ENCODE measurements at regions of chr11 and their contacts with region 1.

Region 1: DNA sequence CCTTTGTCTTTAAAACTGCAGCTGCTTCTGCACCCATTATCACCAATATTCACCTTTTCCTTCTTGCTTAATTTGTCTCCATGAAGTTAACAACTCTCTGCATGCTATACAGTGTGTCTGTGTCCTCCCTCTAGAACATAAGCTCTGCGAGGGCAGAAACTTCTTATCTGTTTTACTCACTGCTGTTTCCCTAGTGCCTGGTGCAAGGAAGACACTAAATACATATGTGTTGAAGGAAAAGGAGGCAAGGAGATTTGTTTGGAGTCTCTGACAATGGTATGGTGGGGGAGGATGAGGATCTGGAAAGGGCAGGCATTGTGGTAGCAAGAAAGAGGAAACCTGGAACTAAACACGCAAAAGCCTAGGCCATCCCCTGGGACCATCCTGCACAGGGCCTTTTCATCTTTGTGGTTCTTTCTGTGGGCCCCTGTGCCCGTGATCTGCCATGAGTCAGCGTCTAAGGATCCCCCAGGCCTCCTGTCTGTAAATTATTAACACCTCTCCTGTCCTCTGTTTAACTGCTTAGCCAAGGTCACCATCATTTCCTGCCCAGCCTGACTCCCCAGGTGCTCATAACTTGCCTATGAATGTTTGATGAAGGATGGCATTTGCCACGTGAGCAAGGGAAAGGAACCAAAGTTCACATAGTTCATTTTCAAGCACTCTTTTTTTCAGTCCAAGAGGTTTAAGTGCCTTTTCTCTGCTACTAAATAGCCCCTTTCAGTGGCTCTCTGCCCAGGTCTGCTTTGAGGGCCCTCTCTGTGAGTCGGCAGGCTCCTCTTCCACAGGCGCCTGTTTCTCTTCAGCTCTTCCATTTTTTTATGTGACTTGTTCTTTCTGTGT is 131.1 kb downstream of the RASSF10 start:
- ATAC-seq: peak in 5 of 8 experiments; percentile 16 to 95 (median 78)
- H3K4me3 ChIP-seq: no peak overlapping the region
- H3K27ac ChIP-seq: no peak overlapping the region
- H3K4me1 ChIP-seq: peaks cover 16 to 18% of the 10 kb centered on the region in 2 donors

Region 2: DNA sequence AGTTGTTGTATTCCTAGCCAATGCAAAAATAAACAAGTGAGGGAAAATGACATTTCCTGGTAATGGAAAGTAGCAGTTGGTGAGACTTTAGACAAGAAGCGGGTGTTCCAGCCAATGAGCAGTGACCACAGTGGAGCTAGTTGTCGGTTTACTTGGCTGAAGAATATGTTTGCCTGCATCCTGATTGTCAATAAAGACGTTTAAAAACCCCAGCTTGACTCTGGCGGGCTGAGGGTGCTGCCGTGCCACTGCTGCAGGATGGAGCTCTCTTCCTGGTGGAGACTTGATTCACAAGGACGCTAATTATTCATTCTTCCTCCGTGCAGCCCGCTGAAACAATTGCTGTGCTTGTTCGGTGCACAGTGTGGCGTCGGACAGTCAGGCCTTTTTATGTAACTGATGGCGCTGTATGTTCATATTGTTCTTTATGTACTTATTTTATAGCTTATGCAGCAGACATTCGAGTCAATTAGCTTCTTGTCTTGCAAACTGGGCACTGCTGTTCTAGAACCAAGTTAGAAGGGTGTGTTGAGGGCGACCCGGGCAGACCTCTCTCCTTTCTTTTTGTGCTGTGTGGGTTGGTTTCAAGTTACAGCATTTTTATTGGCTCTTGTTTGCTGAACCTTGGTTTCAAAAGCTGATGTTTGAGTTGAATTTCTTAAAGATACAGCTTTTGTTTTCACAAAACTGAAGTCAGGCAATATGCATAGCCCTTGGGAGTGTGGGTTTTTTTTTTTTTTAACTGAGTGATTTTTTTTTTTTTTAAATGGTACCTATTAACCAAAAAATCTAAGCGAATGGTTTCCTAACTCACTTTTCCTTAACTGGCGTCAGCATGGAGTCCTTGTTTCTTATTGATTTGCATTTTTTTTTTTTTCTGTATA is 312.1 kb before region 1 on chr11:
- in situ Hi-C with region 1: no loop called
- ATAC-seq: peak; percentile 71 to 92 (median 78)
- H3K4me3 ChIP-seq: peak overlapping the region; percentile 12 to 36 (median 25)
- H3K27ac ChIP-seq: peak overlapping the region in 1 of 2 donors; percentile 54
- H3K4me1 ChIP-seq: peaks cover 27 to 39% of the 10 kb centered on the region in 2 donors

Region 3: GRCh38 chr11:13238879-13239514 is 98.7 kb after region 1 on chr11:
- in situ Hi-C with region 1: loop called in 1 of 9 experiments (anchors 25 kb)
- ATAC-seq: peak in 4 of 8 experiments; percentile 46 to 80 (median 57)
- H3K4me3 ChIP-seq: no peak overlapping the region
- H3K27ac ChIP-seq: no peak overlapping the region
- H3K4me1 ChIP-seq: peaks cover 0 to 5% of the 10 kb centered on the region in 2 donors

Measured in motor neuron (in vitro differentiated cells).